ENCODE measurements at regions of chr7 and their contacts with region 1.

Region 1: DNA sequence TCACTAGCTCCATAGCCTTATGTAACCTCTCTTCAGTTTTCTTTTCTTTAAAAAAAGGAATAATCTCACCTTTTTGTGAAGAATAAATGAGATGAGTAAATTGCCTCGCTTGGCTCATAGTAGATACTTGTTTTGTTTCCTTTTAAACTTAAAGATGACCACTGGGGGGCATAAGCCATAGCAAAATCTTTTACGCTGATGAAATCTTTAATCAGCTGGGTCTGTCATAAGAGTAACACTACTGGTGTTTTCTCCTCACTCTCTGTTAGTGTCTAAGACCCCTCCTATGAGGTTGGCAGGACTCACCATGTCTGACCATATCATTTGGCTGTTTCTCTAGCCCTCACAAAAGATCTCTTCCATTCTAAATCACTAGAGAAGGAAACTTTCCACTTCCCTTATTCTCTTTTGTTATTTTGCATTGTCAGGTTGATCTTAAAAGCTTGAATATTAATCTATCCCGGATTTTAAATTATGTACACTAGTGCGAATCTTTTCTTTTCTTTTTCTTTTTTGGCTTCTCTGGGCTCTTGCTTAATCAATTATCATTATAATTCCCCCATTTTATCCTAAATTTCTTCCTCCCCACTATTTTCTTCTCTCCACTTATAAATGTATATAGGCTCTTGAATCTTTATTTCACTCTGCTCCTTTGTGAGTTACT is 12.5 kb downstream of the STAG3 start:
- DNase-seq: peak in 2 of 9 experiments; percentile 70 to 79
- ATAC-seq: peak; percentile 95
- H3K4me3 ChIP-seq: no peak overlapping the region
- H3K4me3 Mint-ChIP-seq: no peak overlapping the region
- H3K27ac ChIP-seq: no peak overlapping the region
- H3K27ac Mint-ChIP-seq: no peak overlapping the region
- H3K4me1 ChIP-seq: peaks cover 23% of the 10 kb centered on the region
- H3K4me1 Mint-ChIP-seq: peaks cover 36% of the 10 kb centered on the region
- H3K27me3 ChIP-seq: no peaks in the 10 kb centered on the region
- H3K27me3 Mint-ChIP-seq: no peaks in the 10 kb centered on the region
- CTCF ChIP-seq: peak; percentile 56

Region 2: DNA sequence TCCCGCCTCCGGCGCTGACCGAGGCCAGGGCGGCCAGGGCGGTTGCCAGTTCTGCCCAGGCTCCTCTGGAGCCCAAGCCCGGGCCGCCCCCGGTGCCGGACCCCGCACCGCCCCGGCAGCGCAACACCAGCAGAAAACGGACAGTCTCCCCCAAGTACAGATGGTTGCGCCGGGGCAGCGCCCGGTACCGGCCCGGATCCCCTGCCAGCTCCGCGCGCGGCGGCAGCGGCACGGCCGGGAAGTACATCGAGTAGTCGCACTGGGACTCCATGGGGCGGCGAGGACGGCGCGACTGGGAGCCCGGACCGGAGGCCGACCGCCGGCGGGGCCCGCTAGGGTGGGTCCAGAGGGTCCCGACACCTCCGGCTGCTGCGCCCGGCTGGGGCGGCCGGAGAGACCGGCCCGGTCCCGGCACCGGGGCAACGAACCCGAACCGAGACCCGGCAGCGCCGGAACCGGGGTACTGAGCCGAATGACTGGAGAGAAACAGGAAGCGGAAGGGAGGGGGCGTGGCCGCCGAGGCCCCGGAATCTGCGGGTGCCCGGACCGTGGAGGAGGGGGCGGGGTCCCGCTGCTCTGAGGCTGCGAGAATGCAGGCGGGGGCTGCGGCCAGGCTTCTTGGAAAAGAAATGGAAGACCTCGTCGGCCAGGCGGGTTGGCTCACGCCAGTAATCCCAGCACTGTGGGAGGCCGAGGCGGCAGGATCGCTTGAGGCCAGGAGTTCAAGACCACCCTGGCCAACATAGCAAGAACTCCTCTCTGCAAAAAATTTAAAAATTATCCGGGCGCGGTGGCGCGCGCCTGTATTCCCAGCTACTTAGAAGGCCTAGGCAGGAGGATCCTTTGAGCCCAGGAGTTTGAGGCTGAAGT is 31.7 kb before region 1 on chr7 and contains the start of gene TRAPPC14:
- CTCF ChIA-PET with region 1: interaction called, 13 read pairs
- POLR2A ChIA-PET with region 1: no interaction called
- intact Hi-C with region 1: no loop called
- DNase-seq: peak; percentile 66 to 95 (median 90)
- ATAC-seq: peak; percentile 83
- H3K4me3 ChIP-seq: peak within 1 kb of the TSS; percentile 78 to 90
- H3K4me3 Mint-ChIP-seq: peak within 1 kb of the TSS; percentile 85
- H3K27ac ChIP-seq: peak within 1 kb of the TSS; percentile 57 to 73
- H3K27ac Mint-ChIP-seq: peak within 1 kb of the TSS; percentile 82
- H3K4me1 ChIP-seq: peaks cover 54% of the 10 kb centered on the region
- H3K4me1 Mint-ChIP-seq: peaks cover 54% of the 10 kb centered on the region
- H3K27me3 ChIP-seq: no peaks in the 10 kb centered on the region
- H3K27me3 Mint-ChIP-seq: no peaks in the 10 kb centered on the region
- CTCF ChIP-seq: no peak
- total RNA-seq, gene TRAPPC14: 40.6 to 47.1 TPM

Region 3: GRCh38 chr7:100177045-100178001 is 12.9 kb before region 1 on chr7 and contains the starts of genes GPC2 and STAG3:
- CTCF ChIA-PET with region 1: interaction called, 11 read pairs
- POLR2A ChIA-PET with region 1: interaction called, 3 read pairs
- intact Hi-C with region 1: no loop called
- DNase-seq: peak; percentile 89 to 98 (median 97)
- ATAC-seq: peak; percentile 92
- H3K4me3 ChIP-seq: peak within 1 kb of the TSS; percentile 52 to 61
- H3K4me3 Mint-ChIP-seq: peak within 1 kb of the TSS; percentile 74
- H3K27ac ChIP-seq: peak within 1 kb of the TSS in 1 of 2 experiments; percentile 6
- H3K27ac Mint-ChIP-seq: peak within 1 kb of the TSS; percentile 80
- H3K4me1 ChIP-seq: peaks cover 33% of the 10 kb centered on the region
- H3K4me1 Mint-ChIP-seq: peaks cover 43% of the 10 kb centered on the region
- H3K27me3 ChIP-seq: peaks cover 0 to under 1% of the 10 kb centered on the region in 2 experiments
- H3K27me3 Mint-ChIP-seq: no peaks in the 10 kb centered on the region
- CTCF ChIP-seq: no peak
- total RNA-seq, gene GPC2: 10.5 to 13.3 TPM
- total RNA-seq, gene STAG3: 6.3 to 6.6 TPM

Region 4: GRCh38 chr7:100208911-100209408 is 18.8 kb after region 1 on chr7:
- CTCF ChIA-PET with region 1: interaction called, 18 read pairs
- POLR2A ChIA-PET with region 1: interaction called, 3 read pairs
- intact Hi-C with region 1: loop called in 1 of 2 experiments (anchors 2 kb)
- DNase-seq: peak in 3 of 9 experiments; percentile 27 to 56 (median 43)
- ATAC-seq: peak; percentile 32
- H3K4me3 ChIP-seq: no peak overlapping the region
- H3K4me3 Mint-ChIP-seq: peak overlapping the region; percentile 13
- H3K27ac ChIP-seq: no peak overlapping the region
- H3K27ac Mint-ChIP-seq: peak overlapping the region; percentile 66
- H3K4me1 ChIP-seq: peaks cover 55% of the 10 kb centered on the region
- H3K4me1 Mint-ChIP-seq: peaks cover 53% of the 10 kb centered on the region
- H3K27me3 ChIP-seq: no peaks in the 10 kb centered on the region
- H3K27me3 Mint-ChIP-seq: no peaks in the 10 kb centered on the region
- CTCF ChIP-seq: no peak

Region 5: DNA sequence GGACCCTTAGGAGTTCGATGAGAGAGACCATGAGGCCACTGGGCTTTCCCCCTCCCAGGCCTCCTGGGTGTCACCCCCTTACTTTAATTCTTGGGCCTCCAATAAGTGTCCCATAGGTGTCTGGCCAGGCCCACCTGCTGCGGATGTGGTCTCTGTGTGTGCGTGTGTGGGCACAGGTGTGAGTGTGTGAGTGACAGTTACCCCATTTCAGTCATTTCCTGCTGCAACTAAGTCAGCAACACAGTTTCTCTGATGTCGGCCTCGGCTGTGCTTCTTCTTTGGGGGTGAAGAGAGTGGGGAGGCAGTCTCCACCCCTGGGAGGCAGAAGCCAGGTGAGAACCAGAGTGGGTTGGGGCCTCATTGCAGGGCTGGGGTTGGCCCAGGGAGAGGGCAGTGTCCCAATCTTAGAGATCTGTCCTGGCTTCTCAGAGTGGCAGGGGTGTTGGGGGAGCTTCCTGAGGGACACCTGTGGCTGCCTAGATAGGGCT is 31.1 kb after region 1 on chr7:
- CTCF ChIA-PET with region 1: interaction called, 31 read pairs
- POLR2A ChIA-PET with region 1: interaction called, 3 read pairs
- intact Hi-C with region 1: loop called (anchors 1 kb)
- DNase-seq: peak; percentile 75 to 95 (median 86)
- ATAC-seq: peak; percentile 67
- H3K4me3 ChIP-seq: peak overlapping the region; percentile 84 to 88
- H3K4me3 Mint-ChIP-seq: peak overlapping the region; percentile 94
- H3K27ac ChIP-seq: peak overlapping the region; percentile 93 to 98
- H3K27ac Mint-ChIP-seq: peak overlapping the region; percentile 99
- H3K4me1 ChIP-seq: peaks cover 52% of the 10 kb centered on the region
- H3K4me1 Mint-ChIP-seq: peaks cover 62% of the 10 kb centered on the region
- H3K27me3 ChIP-seq: no peaks in the 10 kb centered on the region
- H3K27me3 Mint-ChIP-seq: no peaks in the 10 kb centered on the region
- CTCF ChIP-seq: no peak

Measured in CD8-positive, alpha-beta T cell (primary cell).